AG04449 (cell line): ENCODE measurements at regions of chr18 and their contacts with region 1.

Region 1: DNA sequence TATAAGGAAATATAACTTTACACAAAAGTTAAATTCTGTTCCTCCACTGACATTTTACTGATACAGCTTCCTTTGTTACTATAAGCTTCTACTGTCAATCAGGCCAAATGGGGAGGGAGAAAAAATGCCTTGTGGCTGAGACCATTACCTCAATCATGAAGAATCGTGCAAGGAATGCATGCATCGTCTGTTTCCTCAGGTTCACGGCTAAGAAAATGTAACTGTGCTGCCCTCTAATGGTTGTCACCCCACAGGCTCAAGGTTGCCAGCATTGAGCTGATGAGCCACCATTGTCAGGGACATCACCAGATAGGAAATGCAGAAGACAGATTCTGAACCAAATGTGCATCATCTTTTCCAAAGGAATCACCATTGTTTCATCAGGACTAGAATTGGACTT is 426.9 kb downstream of the CDH2 start:
- DNase-seq: peak; percentile 58
- H3K4me3 ChIP-seq: no peak overlapping the region
- CTCF ChIP-seq: peak; percentile 87

Region 2: DNA sequence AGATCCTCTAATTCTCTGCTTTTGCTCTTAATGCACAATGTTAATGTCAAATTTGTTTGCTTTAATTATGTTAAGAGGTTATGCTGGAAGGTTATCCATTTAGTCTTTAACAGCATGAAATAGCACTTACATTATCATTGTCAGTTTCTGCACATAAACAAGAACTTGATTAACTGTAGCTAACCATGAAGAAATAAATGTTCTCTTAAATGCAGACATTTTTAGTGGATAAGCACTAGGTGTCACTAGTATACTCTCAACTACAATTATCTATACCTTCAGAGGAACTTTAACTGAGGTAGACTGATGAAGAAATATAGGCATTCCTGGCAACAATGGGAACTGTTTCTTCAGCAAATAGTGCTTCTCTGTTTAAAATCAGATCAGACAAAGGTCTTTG is 386.1 kb before region 1 on chr18:
- CTCF ChIA-PET with region 1: interaction called, 12 read pairs
- POLR2A ChIA-PET with region 1: no interaction called
- DNase-seq: no peak
- H3K4me3 ChIP-seq: no peak overlapping the region
- CTCF ChIP-seq: no peak

Region 3: GRCh38 chr18:27605107-27605834 is 144.7 kb before region 1 on chr18:
- CTCF ChIA-PET with region 1: interaction called, 300 read pairs
- POLR2A ChIA-PET with region 1: interaction called, 7 read pairs
- DNase-seq: peak; percentile 29
- H3K4me3 ChIP-seq: no peak overlapping the region
- CTCF ChIP-seq: peak; percentile 78

Region 4: DNA sequence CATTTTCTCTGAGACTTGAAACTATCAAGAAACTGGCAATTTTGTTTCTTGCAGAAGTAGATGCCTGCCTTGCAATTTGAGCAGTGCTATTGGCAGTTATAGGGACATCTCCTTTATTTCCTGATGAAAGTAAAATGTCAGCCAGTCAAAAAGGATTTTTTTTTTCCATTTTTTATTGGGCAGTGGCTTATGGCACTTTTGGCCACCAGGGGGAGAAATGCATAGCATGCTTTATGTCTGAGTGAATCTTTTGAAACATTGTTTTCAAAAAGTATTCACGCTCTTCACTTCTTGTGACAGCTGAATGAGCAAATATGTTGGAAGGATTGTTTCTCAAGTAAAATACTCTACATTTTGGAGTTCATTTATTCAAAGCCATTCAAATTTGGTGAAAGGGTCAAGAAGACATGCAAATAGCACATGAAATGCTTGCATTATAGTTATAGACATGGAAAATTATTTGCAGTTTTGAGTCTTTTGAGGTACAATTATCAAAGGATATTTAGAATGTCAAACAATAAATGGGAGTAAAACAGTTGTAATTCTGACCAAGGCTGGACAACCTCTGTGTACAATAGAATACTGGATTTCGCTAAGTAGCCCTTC is 64.1 kb before region 1 on chr18:
- CTCF ChIA-PET with region 1: interaction called, 113 read pairs
- POLR2A ChIA-PET with region 1: no interaction called
- DNase-seq: no peak
- H3K4me3 ChIP-seq: no peak overlapping the region
- CTCF ChIP-seq: peak; percentile 55

Region 5: GRCh38 chr18:27735113-27735512 is 14.9 kb before region 1 on chr18:
- CTCF ChIA-PET with region 1: interaction called, 13 read pairs
- POLR2A ChIA-PET with region 1: no interaction called
- DNase-seq: no peak
- H3K4me3 ChIP-seq: no peak overlapping the region
- CTCF ChIP-seq: no peak

Region 6: DNA sequence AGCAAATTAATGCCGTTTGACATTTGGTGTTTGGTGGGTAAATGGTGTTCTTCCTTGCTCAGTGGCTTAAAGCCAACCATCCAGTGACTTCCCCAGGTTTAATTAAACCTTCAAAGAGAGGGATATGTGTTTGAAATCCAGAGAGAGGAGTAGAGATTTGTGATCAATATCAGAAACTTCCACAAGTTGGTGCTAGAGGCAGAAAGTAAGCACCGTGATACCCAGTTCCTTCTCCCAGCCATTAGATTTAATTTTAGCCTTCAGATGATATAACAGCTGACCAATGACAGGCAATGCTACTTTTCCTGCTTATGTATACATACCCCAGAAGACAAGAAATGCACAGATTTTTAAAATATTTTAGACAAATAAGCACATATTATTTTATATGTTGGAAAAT is 28.4 kb after region 1 on chr18:
- CTCF ChIA-PET with region 1: interaction called, 15 read pairs
- POLR2A ChIA-PET with region 1: no interaction called
- DNase-seq: no peak
- H3K4me3 ChIP-seq: no peak overlapping the region
- CTCF ChIP-seq: peak; percentile 48

Region 7: GRCh38 chr18:27970321-27970720 is 220.3 kb after region 1 on chr18:
- CTCF ChIA-PET with region 1: no interaction called
- POLR2A ChIA-PET with region 1: no interaction called
- DNase-seq: no peak
- H3K4me3 ChIP-seq: no peak overlapping the region
- CTCF ChIP-seq: no peak